Ascending aorta (tissue), 2 donors: ENCODE measurements at regions of chr18 and their contacts with region 1.

Region 1: GRCh38 chr18:35343936-35344735 is at the start of gene ZNF24:
- DNase-seq: peak; percentile 84 to 98
- H3K4me3 ChIP-seq: peak within 1 kb of the TSS; percentile 70 to 96
- H3K27ac ChIP-seq: peak within 1 kb of the TSS; percentile 93 to 100
- H3K4me1 ChIP-seq: peaks cover 10 to 17% of the 10 kb centered on the region in 2 donors
- H3K27me3 ChIP-seq: no peaks in the 10 kb centered on the region
- CTCF ChIP-seq: no peak
- total RNA-seq, gene ZNF24: 11.5 TPM

Region 2: DNA sequence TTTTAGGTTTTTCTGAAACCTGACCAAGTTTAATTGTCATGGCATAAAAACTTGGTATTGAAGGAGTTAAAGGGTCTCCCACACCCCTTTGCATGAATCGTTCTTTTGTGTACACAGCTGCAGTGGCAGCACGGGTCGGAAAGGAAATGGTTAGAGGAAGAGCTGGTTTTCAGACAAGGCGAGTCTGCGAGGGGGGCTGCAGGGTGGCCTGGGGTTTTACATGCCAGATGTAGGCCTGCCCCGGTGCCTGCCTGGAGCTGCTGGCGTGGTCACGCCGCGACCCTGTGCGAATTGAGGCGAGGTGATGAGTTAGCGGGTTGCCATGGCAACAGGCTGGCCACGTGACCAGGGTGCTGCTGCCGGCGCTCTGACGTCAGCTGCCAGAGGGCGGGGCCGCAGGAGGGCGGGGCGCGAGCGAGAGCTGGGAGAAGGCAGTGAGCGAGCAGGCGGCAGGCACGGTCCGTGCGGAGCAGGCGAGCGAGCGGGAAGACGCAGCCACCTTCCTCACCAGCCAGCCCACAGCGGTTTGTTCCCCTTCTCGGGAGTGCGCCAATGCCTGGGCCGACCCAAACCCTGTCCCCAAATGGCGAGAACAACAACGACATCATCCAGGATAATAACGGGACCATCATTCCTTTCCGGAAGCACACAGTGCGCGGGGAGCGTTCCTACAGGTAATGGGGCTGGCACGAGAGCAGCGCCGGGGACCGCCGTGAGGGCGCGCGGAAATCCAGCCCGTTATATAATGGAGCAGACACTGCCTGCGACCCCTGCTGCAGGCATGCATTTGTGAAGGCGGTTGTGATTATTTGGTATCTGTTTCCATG is 302.9 kb before region 1 on chr18 and contains the start of gene MAPRE2:
- intact Hi-C with region 1: loop called (anchors 5 kb)
- DNase-seq: peak; percentile 97 to 100
- H3K4me3 ChIP-seq: peak within 1 kb of the TSS; percentile 79 to 82
- H3K27ac ChIP-seq: peak within 1 kb of the TSS; percentile 76 to 82
- H3K4me1 ChIP-seq: peaks cover 0 to 27% of the 10 kb centered on the region in 2 donors
- H3K27me3 ChIP-seq: no peaks in the 10 kb centered on the region
- CTCF ChIP-seq: no peak
- total RNA-seq, gene MAPRE2: 22.4 TPM

Region 3: DNA sequence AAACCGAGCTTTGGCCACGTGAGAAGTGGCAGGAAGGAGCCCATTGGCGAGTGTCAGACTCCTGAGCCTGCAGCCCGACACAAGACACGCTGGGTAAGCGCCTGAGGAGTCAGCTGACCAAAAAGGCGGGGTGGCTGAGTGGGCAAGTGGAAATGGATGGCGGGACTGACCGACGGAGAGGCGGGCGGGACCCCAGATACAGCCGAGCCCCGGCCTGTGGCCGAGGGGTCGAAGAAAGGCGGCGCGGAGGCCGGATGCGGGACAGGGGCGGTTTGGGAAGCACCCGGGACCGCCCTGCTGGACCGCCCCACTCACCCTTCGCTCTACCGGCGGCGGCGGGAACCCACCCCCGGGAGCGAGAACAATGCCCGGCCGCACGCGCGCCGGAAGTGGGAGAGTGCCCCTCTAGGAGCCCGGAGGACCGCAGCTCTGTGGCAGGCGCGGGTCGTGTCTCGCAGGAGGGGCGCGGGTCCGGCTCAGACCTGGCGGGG is 76.9 kb before region 1 on chr18:
- intact Hi-C with region 1: loop called (anchors 2 kb)
- DNase-seq: peak; percentile 28 to 88
- H3K4me3 ChIP-seq: peak overlapping the region; percentile 60 to 83
- H3K27ac ChIP-seq: peak overlapping the region; percentile 79 to 85
- H3K4me1 ChIP-seq: peaks cover 0 to 4% of the 10 kb centered on the region in 2 donors
- H3K27me3 ChIP-seq: no peaks in the 10 kb centered on the region
- CTCF ChIP-seq: peak in 1 of 3 experiments; percentile 8

Region 4: DNA sequence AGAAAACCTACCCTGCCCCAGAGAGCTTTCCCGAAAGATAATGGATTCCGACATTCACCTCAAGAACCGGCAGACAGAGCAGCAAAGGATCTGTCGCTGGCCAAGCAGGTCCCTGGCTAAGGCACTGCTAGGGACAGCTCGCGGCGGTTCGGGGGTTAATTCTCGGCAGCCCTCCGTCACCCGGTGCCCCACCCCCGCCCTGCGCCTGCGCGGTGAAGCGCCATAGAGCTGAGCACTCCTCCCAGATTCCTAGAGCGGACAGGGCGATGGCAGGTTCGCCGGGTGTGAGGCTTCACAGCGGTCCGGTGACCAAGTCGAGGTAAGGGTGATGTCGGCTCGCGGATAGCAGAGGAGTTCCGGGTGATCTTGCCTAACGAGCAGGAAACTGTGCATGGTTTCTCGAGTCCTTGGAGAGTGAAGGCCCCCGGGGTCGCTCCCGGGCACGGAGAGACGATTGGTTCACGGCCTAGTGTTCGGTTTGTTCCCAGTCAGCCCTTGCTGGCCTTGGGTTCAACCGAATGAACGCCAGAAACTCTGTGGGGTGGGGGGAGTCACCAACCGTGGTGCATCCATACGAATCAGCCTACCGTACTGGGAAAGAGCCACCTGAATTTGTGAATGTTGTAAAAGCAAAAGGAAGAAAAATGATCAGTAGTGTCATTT is 53.9 kb before region 1 on chr18 and contains the start of gene ZSCAN30:
- intact Hi-C with region 1: loop called (anchors 1 kb)
- DNase-seq: peak; percentile 79 to 97
- H3K4me3 ChIP-seq: peak within 1 kb of the TSS; percentile 73 to 86
- H3K27ac ChIP-seq: peak within 1 kb of the TSS; percentile 82 to 86
- H3K4me1 ChIP-seq: peaks cover 3 to 11% of the 10 kb centered on the region in 2 donors
- H3K27me3 ChIP-seq: no peaks in the 10 kb centered on the region
- CTCF ChIP-seq: no peak
- total RNA-seq, gene ZSCAN30: 7.5 TPM

Region 5: GRCh38 chr18:35322486-35323458 is 21.4 kb before region 1 on chr18:
- intact Hi-C with region 1: no loop called
- DNase-seq: no peak
- H3K4me3 ChIP-seq: no peak overlapping the region
- H3K27ac ChIP-seq: no peak overlapping the region
- H3K4me1 ChIP-seq: no peaks in the 10 kb centered on the region
- H3K27me3 ChIP-seq: no peaks in the 10 kb centered on the region
- CTCF ChIP-seq: no peak

Region 6: GRCh38 chr18:35376742-35377695 is 32.9 kb after region 1 on chr18 and contains the start of gene ZNF396:
- intact Hi-C with region 1: loop called (anchors 5 kb)
- DNase-seq: peak; percentile 46 to 91
- H3K4me3 ChIP-seq: peak within 1 kb of the TSS; percentile 72 to 81
- H3K27ac ChIP-seq: peak within 1 kb of the TSS; percentile 44 to 65
- H3K4me1 ChIP-seq: peaks cover 0 to 2% of the 10 kb centered on the region in 2 donors
- H3K27me3 ChIP-seq: no peaks in the 10 kb centered on the region
- CTCF ChIP-seq: no peak
- total RNA-seq, gene ZNF396: 0.21 TPM

Region 7: GRCh38 chr18:36067055-36067957 is 723.2 kb after region 1 on chr18 and contains the start of gene RPRD1A:
- intact Hi-C with region 1: loop called (anchors 5 kb)
- DNase-seq: peak; percentile 83 to 98
- H3K4me3 ChIP-seq: peak within 1 kb of the TSS; percentile 79 to 98
- H3K27ac ChIP-seq: peak within 1 kb of the TSS; percentile 88 to 92
- H3K4me1 ChIP-seq: peaks cover 6 to 10% of the 10 kb centered on the region in 2 donors
- H3K27me3 ChIP-seq: no peaks in the 10 kb centered on the region
- CTCF ChIP-seq: no peak
- total RNA-seq, gene RPRD1A: 16.4 TPM